ENCODE measurements at regions of chr7 and their contacts with region 1.

Region 1: GRCh38 chr7:135617781-135618180 is 44.5 kb upstream of the STMP1 start:
- DNase-seq: no peak
- H3K4me3 ChIP-seq: no peak overlapping the region
- H3K27ac ChIP-seq: no peak overlapping the region
- H3K4me1 ChIP-seq: no peaks in the 10 kb centered on the region
- H3K27me3 ChIP-seq: no peaks in the 10 kb centered on the region
- CTCF ChIP-seq: no peak
- POLR2A ChIP-seq: no peak

Region 2: GRCh38 chr7:135308583-135309327 is 309.0 kb before region 1 on chr7:
- intact Hi-C with region 1: no loop called
- DNase-seq: no peak
- H3K4me3 ChIP-seq: no peak overlapping the region
- H3K27ac ChIP-seq: no peak overlapping the region
- H3K4me1 ChIP-seq: no peaks in the 10 kb centered on the region
- H3K27me3 ChIP-seq: no peaks in the 10 kb centered on the region
- CTCF ChIP-seq: no peak
- POLR2A ChIP-seq: no peak

Region 3: DNA sequence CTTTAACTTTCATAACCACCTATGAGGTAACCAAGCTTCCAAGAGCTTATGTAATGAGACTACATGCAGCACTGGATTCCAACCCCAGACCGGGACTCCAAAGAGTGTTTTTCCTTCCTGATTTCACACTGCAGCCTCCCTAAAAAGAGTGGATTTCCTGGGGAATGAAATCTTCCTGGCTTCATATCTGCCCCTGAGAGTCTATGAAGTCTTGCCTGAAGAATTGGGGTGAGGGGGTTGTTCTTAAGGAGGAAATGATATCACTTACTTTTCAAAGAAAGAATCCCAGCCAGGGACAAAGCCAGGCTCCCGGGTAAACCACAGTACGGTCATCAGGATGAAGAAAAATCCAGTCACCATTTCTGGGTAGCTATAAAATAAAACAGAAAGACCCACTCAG is 74.3 kb after region 1 on chr7:
- intact Hi-C with region 1: loop called (anchors 2 kb)
- DNase-seq: no peak
- H3K4me3 ChIP-seq: no peak overlapping the region
- H3K27ac ChIP-seq: no peak overlapping the region
- H3K4me1 ChIP-seq: no peaks in the 10 kb centered on the region
- H3K27me3 ChIP-seq: no peaks in the 10 kb centered on the region
- CTCF ChIP-seq: no peak
- POLR2A ChIP-seq: no peak

Region 4: DNA sequence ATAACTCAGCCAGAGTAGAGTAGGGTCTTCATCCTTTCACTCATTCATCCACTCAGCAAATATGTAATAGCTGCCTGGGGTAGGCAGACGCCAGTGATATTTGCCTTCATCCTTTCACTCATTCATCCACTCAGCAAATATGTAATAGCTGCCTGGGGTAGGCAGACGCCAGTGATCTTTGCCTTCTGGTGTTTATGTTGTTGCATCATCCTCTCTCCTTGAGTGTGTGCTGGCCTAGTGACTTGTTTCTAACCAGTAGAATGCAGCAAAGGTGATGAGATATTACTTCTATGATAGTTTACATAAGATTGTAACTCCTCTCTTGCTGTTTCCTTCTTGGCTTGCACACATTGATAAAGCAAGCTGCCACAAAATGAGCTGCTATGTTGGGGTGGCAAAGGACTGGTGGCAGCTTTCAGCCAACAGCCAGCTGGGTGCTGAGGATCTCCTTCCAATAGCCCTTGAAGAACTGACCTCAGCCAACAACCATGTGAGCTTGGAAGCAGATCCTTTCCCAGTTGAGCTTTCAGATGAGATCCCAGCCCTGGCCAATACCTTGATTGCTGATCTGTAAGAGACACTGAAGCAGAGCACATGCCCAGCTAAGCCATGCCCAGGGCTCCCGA is 382.6 kb after region 1 on chr7:
- intact Hi-C with region 1: no loop called
- DNase-seq: no peak
- H3K4me3 ChIP-seq: no peak overlapping the region
- H3K27ac ChIP-seq: no peak overlapping the region
- H3K4me1 ChIP-seq: no peaks in the 10 kb centered on the region
- H3K27me3 ChIP-seq: no peaks in the 10 kb centered on the region
- CTCF ChIP-seq: no peak
- POLR2A ChIP-seq: no peak

Region 5: DNA sequence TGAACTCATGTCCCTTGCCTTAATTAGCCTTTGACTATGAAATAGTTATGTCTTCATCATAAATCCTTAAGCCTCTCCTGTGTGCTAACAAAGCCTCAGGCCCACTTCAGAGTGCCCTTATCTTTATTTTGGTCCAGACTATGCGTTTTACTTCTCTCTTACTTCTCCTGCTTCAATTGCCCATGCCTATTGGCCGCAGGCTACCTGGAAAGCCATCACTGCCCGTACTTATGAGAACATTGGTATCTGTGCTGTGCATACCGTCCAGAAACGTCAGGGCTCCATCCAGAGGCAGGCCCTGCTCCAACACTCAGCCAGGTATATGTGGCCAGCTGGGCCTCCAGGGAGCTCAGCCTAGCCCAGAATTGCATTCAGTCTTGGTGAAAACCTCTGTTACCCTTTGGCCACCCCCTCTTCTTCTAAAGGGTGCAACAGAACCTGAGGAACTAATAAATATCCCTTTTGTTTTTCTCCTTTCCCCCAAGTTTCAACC is 571.8 kb after region 1 on chr7:
- intact Hi-C with region 1: no loop called
- DNase-seq: no peak
- H3K4me3 ChIP-seq: no peak overlapping the region
- H3K27ac ChIP-seq: no peak overlapping the region
- H3K4me1 ChIP-seq: no peaks in the 10 kb centered on the region
- H3K27me3 ChIP-seq: no peaks in the 10 kb centered on the region
- CTCF ChIP-seq: no peak
- POLR2A ChIP-seq: no peak